OCI-LY7 (cell line): ENCODE measurements at regions of chr1 and their contacts with region 1.

Region 1: GRCh38 chr1:218299416-218299815 is 14.3 kb downstream of the RRP15 start:
- DNase-seq: peak; percentile 30
- H3K4me3 ChIP-seq: no peak overlapping the region
- H3K27ac ChIP-seq: no peak overlapping the region
- H3K4me1 ChIP-seq: peaks cover 14% of the 10 kb centered on the region
- CTCF ChIP-seq: peak; percentile 77

Region 2: DNA sequence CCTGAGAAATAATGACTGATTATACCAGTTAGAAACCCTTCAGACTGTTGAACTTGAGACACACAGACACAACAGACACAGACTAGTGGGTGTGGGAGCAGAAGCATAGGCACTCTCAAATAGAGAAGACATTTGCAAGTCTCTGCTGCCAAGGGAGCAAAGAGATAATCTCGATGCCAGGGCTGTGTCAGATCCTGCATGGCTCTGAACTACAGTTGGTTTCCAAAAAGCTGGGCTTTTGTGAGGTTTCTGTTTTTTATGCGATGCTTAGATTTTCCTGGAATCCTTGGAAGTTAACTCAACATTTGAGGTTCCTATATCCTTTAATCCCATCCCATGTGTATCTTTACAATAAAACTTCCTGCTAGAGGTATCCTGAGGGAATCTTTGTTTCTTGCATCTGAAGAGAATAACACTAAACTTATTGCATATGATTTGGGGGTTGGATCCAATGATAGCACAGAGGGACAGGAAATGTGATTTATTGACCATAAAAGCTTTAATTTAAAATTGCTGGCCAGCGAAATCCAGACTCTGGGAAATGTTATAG is 431.9 kb before region 1 on chr1:
- CTCF ChIA-PET with region 1: no interaction called
- POLR2A ChIA-PET with region 1: no interaction called
- intact Hi-C with region 1: no loop called
- DNase-seq: no peak
- H3K4me3 ChIP-seq: no peak overlapping the region
- H3K27ac ChIP-seq: no peak overlapping the region
- H3K4me1 ChIP-seq: no peaks in the 10 kb centered on the region
- CTCF ChIP-seq: no peak

Region 3: GRCh38 chr1:218058730-218059129 is 240.7 kb before region 1 on chr1:
- CTCF ChIA-PET with region 1: no interaction called
- POLR2A ChIA-PET with region 1: no interaction called
- intact Hi-C with region 1: no loop called
- DNase-seq: no peak
- H3K4me3 ChIP-seq: no peak overlapping the region
- H3K27ac ChIP-seq: no peak overlapping the region
- H3K4me1 ChIP-seq: no peaks in the 10 kb centered on the region
- CTCF ChIP-seq: no peak

Region 4: GRCh38 chr1:218284934-218285635 is 14.3 kb before region 1 on chr1 and contains the start of gene RRP15:
- CTCF ChIA-PET with region 1: interaction called, 5 read pairs
- POLR2A ChIA-PET with region 1: interaction called, 12 read pairs
- intact Hi-C with region 1: no loop called
- DNase-seq: peak; percentile 91
- H3K4me3 ChIP-seq: peak within 1 kb of the TSS; percentile 96
- H3K27ac ChIP-seq: peak within 1 kb of the TSS; percentile 48
- H3K4me1 ChIP-seq: peaks cover 19% of the 10 kb centered on the region
- CTCF ChIP-seq: no peak
- total RNA-seq, gene RRP15: 7.2 and 19.6 TPM in 2 replicates

Region 5: GRCh38 chr1:218317061-218317460 is 17.6 kb after region 1 on chr1:
- CTCF ChIA-PET with region 1: no interaction called
- POLR2A ChIA-PET with region 1: interaction called, 3 read pairs
- intact Hi-C with region 1: loop called (anchors 1 kb)
- DNase-seq: no peak
- H3K4me3 ChIP-seq: no peak overlapping the region
- H3K27ac ChIP-seq: no peak overlapping the region
- H3K4me1 ChIP-seq: no peaks in the 10 kb centered on the region
- CTCF ChIP-seq: no peak